BJ (cell line): ENCODE measurements at regions of chr10 and their contacts with region 1.

Region 1: DNA sequence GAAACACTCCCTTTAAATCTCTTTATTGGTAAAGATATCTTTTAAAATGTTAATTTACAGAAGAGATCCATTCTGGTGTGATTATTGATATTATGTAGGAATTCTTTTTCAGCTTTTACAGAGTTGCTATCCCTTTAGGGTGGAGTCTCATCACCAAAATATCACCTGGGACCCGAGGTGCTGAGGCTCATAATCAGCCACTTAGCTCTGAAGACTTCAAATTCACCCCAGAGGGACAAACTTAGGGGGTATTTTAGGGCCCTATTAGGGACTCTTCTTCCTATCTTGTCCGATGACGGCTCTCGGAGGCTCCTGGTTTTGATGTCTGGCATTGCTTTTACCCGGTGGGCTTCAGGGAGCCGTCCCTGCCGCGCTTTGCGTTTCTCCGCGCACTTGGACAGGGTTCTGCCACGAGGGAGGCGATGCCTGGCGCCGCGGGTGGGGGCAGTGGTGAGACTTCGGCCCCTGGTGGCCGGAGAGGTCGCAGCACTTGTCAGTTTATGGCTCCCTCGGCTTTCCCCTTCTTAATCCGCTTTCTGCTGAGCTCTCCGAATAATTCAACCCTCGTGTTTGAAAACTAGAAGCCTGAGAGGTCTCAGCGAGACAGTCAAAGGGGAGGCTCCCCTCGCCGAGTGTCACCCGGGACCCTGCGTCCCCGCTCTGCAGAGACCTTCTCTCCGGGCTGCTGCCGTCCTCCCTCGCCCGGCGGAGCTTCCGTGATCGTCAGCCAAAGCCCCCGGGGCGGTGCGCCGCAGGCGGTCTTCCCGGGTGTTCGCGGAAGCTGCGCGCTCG is 27.8 kb downstream of the RBM20 start:
- DNase-seq: no peak
- H3K4me3 ChIP-seq: peak overlapping the region; percentile 52
- H3K27me3 ChIP-seq: peaks cover 20% of the 10 kb centered on the region
- CTCF ChIP-seq: peak; percentile 96

Region 2: GRCh38 chr10:110512461-110513187 is 159.4 kb before region 1 on chr10:
- CTCF ChIA-PET with region 1: no interaction called
- POLR2A ChIA-PET with region 1: no interaction called
- DNase-seq: no peak
- H3K4me3 ChIP-seq: no peak overlapping the region
- H3K27me3 ChIP-seq: no peaks in the 10 kb centered on the region
- CTCF ChIP-seq: no peak

Region 3: DNA sequence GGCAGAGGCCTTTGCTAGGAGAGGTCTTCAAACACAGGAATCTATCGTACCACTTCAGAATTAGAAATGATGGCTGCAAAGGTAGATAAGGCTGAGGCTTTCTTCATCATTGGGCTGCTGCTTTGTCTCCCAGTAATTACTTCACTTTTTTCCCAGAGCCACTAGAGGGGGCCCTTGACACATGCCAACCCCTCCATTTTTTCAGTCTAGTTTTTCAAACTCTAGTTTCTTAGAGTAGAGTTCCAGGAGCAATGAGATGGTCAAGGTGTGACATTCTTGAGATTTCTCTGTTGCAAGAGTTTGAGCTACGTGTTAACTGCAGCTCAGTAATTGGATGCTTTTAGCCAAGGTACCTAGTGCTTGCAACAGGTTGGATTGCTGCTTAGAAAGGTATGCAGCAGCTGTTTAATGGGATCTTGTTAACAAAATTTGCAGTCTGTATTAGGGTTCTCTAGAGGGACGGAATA is 61.6 kb before region 1 on chr10:
- CTCF ChIA-PET with region 1: interaction called, 21 read pairs
- POLR2A ChIA-PET with region 1: no interaction called
- DNase-seq: no peak
- H3K4me3 ChIP-seq: no peak overlapping the region
- H3K27me3 ChIP-seq: peaks cover 4% of the 10 kb centered on the region
- CTCF ChIP-seq: peak; percentile 88

Region 4: GRCh38 chr10:110617425-110618229 is 54.4 kb before region 1 on chr10:
- CTCF ChIA-PET with region 1: interaction called, 12 read pairs
- POLR2A ChIA-PET with region 1: no interaction called
- DNase-seq: no peak
- H3K4me3 ChIP-seq: no peak overlapping the region
- H3K27me3 ChIP-seq: peaks cover 1% of the 10 kb centered on the region
- CTCF ChIP-seq: no peak

Region 5: DNA sequence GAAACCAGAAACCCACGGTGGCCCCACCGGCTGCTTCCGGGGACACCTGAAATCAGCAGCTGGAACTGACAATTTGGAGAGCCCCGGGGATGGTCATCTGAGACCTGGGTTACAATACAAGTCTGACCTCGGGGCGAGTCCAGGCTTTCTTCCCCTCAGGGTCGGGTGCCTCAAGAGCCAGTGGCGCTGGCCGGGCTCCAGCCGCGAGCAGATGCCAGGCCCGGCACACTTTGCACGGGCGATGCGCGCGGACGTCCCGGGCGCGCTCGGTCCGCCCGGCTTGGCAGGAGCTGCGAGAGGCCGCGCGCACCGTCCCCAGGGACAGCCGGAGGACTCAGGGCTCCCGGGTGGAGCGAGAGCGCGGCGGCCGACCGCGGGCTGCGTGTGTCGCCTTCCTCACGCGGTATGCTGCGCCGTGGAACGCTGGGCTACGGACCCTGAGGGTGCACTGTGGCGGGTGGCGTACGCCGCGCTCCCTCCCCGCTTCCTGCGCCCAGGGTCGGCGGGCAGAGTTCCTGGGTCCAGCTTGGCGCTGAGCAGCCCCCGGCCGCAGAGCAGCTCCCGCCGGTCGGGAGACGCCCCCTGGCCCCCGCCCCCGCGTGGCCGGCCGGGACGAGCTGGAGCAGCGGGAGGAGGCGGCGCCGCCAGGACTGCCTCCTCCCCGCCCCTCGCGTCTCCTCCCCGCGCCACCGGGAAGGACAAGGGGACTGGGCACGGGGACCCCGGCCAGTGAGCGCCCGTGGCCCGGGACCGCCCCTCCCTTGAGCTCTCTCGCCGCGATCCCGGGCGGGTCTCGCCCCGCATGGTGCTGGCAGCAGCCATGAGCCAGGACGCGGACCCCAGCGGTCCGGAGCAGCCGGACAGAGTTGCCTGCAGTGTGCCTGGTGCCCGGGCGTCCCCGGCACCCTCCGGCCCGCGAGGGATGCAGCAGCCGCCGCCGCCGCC is 28.1 kb before region 1 on chr10 and contains the start of gene RBM20:
- CTCF ChIA-PET with region 1: interaction called, 10 read pairs
- POLR2A ChIA-PET with region 1: interaction called, 4 read pairs
- DNase-seq: no peak
- H3K4me3 ChIP-seq: peak within 1 kb of the TSS; percentile 35
- H3K27me3 ChIP-seq: peaks cover 41% of the 10 kb centered on the region
- CTCF ChIP-seq: no peak
- polyA plus RNA-seq, gene RBM20: not detected in 2 replicates

Region 6: GRCh38 chr10:110724116-110724921 is 52.3 kb after region 1 on chr10:
- CTCF ChIA-PET with region 1: no interaction called
- POLR2A ChIA-PET with region 1: no interaction called
- DNase-seq: no peak
- H3K4me3 ChIP-seq: no peak overlapping the region
- H3K27me3 ChIP-seq: peaks cover 4% of the 10 kb centered on the region
- CTCF ChIP-seq: no peak

Region 7: DNA sequence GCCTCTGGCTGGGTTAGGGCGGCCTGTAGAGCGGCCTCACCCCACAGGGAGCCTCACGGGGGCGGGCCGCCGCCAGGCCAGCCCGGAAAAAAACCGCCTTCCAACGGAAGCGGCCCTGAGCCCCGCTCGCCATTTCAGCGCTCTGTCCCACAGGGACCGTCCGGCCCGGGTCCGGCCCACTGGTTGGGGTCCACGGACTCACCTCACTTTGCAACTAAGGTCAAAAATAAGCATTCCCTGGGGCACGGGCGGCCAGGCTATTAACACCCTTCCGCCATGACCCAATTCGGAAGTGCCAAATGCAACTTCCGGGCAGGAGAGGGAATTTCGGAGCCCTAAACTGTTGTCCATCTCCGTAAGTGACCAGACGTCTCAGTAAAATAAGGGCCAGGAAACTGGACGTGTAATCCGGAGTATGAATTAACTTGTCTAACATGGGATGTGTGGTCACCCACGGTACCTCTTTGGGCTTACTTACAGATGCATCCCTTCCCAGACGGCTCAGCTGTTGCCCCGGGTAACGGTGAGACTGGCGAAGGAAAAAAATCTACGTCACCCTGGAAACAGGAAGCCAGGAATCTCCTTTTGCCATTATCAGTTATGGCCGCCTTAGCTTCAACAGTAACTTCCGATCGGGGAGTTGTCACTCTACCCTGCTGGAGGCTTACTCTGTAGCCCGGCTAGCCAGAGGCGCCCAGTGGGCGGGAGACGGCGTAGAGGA is 246.8 kb after region 1 on chr10 and contains the start of gene BBIP1:
- CTCF ChIA-PET with region 1: no interaction called
- POLR2A ChIA-PET with region 1: no interaction called
- DNase-seq: peak; percentile 100
- H3K4me3 ChIP-seq: peak within 1 kb of the TSS; percentile 77
- H3K27me3 ChIP-seq: no peaks in the 10 kb centered on the region
- CTCF ChIP-seq: no peak
- polyA plus RNA-seq, gene BBIP1: 11.0 and 29.8 TPM in 2 replicates